ENCODE measurements at regions of chr5 and their contacts with region 1.

Region 1: DNA sequence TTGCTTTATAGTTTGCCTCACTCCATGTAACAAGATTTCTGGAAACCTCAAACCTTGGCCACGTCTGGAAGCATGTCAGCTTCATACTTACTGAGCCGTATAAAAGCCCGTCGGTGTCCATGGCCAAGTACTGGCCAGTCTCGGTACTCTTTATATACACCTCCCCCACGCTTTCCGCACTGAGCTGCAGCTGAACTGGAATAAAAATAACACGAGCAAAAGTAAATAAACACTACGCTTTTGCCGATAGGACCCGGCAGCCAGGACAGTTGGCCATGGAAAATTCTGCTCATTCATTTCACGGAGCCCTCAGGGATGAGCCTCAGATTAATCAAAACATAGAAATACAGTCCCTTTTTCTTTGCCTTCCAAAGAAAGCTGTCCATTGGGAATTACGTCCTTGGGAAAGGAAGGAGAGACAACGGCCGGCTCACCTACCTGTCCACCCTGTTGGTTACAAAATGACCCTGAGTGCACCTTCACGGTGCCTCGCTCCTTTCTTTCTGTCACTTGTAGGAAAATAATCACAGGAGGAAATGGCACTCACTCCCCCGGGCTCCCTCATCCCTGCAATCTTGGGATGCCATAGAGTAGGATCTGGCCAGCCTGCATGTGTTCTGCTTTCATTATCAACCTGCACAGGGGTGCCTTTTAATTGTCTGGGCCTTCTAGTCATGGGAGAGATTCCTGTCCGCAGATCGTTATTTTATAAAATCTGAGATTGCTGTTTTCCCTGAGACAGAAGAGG is 85.1 kb downstream of the FGF1 start:
- DNase-seq: no peak
- H3K4me3 ChIP-seq: no peak overlapping the region
- H3K27ac ChIP-seq: peak overlapping the region; percentile 11
- H3K4me1 ChIP-seq: peaks cover 34% of the 10 kb centered on the region
- H3K27me3 ChIP-seq: no peaks in the 10 kb centered on the region
- CTCF ChIP-seq: no peak

Region 2: GRCh38 chr5:142422429-142422828 is 178.4 kb before region 1 on chr5:
- CTCF ChIA-PET with region 1: interaction called, 15 read pairs
- dilution Hi-C with region 1: no loop called
- in situ Hi-C with region 1: no loop called
- intact Hi-C with region 1: no loop called
- DNase-seq: peak; percentile 53
- H3K4me3 ChIP-seq: no peak overlapping the region
- H3K27ac ChIP-seq: no peak overlapping the region
- H3K4me1 ChIP-seq: peaks cover 20% of the 10 kb centered on the region
- H3K27me3 ChIP-seq: no peaks in the 10 kb centered on the region
- CTCF ChIP-seq: no peak

Region 3: DNA sequence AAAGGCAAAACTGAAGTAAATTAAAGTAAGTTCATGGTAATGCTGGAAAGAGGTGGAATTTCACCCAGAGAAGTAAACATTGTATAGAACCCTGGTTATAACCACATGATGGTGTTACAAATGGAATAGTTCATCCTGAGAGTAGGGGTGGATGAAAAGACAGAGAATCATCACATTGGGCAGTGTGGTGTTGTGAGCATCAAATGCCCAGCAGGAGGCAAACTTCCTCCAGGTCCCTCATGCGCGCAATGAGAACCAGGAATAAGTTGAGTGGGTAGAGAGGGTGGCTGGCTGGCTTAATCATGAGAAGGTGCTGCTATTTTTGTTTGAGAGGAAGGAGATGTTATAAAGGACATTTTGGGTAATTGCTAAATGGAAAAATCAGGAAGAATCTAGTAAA is 1047.9 kb after region 1 on chr5:
- CTCF ChIA-PET with region 1: no interaction called
- dilution Hi-C with region 1: no loop called
- in situ Hi-C with region 1: no loop called
- intact Hi-C with region 1: no loop called
- DNase-seq: no peak
- H3K4me3 ChIP-seq: no peak overlapping the region
- H3K27ac ChIP-seq: no peak overlapping the region
- H3K4me1 ChIP-seq: peaks cover 7% of the 10 kb centered on the region
- H3K27me3 ChIP-seq: peaks cover 9% of the 10 kb centered on the region
- CTCF ChIP-seq: peak; percentile 29 to 38

Measured in mammary epithelial cell (primary cell).